ENCODE measurements at regions of chr7 and their contacts with region 1.

Region 1: DNA sequence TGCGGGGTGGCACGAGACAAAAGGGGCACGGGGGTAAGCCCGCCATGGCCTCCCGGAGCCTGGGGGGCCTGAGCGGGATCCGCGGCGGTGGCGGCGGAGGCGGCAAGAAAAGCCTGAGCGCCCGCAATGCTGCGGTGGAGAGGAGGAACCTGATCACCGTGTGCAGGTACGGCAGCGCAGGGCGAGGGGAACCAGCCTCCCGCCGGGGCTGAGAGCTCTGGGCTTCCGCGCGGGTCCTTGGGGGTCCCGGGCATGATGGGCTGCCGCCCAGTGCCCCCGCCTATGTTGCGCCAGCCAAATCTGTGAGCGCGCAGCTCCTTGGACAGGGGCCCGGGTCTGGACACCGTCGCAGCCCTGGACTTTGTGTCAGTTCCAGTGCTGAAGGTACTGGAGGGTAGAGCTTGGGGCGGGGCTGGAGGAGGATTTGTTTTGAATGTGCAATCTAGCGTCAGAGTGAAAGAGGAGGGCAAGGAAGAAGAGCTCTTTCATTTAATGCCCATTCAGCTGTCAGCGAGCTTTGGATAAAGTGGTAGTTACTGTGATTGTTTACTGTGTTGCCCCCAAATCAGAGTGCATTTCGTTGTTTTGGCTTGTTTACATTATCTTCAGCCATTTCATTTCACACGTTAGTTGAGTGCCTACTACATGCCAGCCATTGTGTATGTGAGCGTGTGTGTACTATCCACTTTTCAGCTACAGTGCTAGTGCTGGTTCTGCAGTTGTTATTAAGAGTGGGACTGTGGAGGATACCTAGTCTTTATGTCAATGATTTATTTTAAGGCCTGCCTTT is 777 bp downstream of the RUNDC3B start:
- DNase-seq: peak; percentile 33
- H3K4me3 Mint-ChIP-seq: peak overlapping the region; percentile 75
- H3K27ac Mint-ChIP-seq: no peak overlapping the region
- H3K4me1 Mint-ChIP-seq: peaks cover 7% of the 10 kb centered on the region
- H3K27me3 Mint-ChIP-seq: peaks cover 6% of the 10 kb centered on the region

Region 2: DNA sequence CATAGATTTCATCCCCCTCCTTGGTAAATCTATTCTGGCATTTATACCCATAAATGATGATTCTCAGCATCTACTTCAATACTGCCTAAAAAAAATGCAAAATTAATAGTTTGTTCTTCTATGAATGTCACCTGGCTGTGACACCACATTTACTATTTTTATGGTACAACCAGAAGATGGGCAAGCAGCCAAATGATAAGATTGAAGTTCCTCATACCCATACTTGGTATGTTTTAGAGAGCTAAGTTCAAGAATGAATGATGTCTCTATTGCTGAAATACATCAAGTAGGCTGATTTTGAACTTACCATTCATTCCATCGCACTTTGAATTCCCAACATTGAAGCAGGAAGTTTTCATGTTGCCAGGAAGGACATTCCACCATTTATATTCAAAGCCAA is 703.8 kb before region 1 on chr7:
- CTCF ChIA-PET with region 1: no interaction called
- intact Hi-C with region 1: no loop called
- DNase-seq: no peak
- H3K4me3 Mint-ChIP-seq: no peak overlapping the region
- H3K27ac Mint-ChIP-seq: no peak overlapping the region
- H3K4me1 Mint-ChIP-seq: peaks cover 5% of the 10 kb centered on the region
- H3K27me3 Mint-ChIP-seq: peaks cover 2% of the 10 kb centered on the region

Region 3: GRCh38 chr7:87574630-87575029 is 54.3 kb before region 1 on chr7:
- CTCF ChIA-PET with region 1: no interaction called
- intact Hi-C with region 1: loop called (anchors 1 kb)
- DNase-seq: peak; percentile 30
- H3K4me3 Mint-ChIP-seq: no peak overlapping the region
- H3K27ac Mint-ChIP-seq: no peak overlapping the region
- H3K4me1 Mint-ChIP-seq: peaks cover 14% of the 10 kb centered on the region
- H3K27me3 Mint-ChIP-seq: no peaks in the 10 kb centered on the region

Region 4: DNA sequence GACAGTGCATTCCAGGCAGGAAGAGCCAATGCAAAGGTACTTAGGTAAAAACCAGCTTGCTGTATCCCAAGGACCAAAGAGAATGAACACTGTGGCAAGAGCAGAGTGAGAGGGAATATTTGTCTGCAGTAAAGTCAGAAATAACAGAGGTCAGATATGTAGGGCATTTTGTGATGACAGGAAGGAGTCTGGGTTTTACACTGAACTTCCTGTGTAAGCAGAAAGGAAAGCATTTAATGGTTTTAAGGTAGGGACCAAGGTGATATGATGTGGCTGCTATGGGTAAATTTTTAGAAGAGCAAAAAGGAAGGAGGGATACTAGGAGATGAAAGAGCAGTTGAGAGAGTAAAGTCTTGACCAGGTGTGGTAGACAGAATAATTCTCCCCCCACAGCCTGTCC is 38.4 kb before region 1 on chr7:
- CTCF ChIA-PET with region 1: no interaction called
- intact Hi-C with region 1: loop called (anchors 5 kb)
- DNase-seq: no peak
- H3K4me3 Mint-ChIP-seq: no peak overlapping the region
- H3K27ac Mint-ChIP-seq: no peak overlapping the region
- H3K4me1 Mint-ChIP-seq: peaks cover 7% of the 10 kb centered on the region
- H3K27me3 Mint-ChIP-seq: no peaks in the 10 kb centered on the region

Region 5: GRCh38 chr7:87600130-87601124 is 28.5 kb before region 1 on chr7 and contains the start of gene ABCB1:
- CTCF ChIA-PET with region 1: interaction called, 3 read pairs
- intact Hi-C with region 1: loop called (anchors 1 kb)
- DNase-seq: peak; percentile 73
- H3K4me3 Mint-ChIP-seq: peak within 1 kb of the TSS; percentile 84
- H3K27ac Mint-ChIP-seq: peak within 1 kb of the TSS; percentile 8
- H3K4me1 Mint-ChIP-seq: peaks cover 20% of the 10 kb centered on the region
- H3K27me3 Mint-ChIP-seq: peaks cover 5% of the 10 kb centered on the region
- total RNA-seq, gene ABCB1: 2.3 to 3.5 TPM

Measured in activated naive CD4-positive, alpha-beta T cell treated with anti-CD3 and anti-CD28 coated beads for 36 hours (primary cell).